PC-9 (cell line): ENCODE measurements at regions of chr1 and their contacts with region 1.

Region 1: DNA sequence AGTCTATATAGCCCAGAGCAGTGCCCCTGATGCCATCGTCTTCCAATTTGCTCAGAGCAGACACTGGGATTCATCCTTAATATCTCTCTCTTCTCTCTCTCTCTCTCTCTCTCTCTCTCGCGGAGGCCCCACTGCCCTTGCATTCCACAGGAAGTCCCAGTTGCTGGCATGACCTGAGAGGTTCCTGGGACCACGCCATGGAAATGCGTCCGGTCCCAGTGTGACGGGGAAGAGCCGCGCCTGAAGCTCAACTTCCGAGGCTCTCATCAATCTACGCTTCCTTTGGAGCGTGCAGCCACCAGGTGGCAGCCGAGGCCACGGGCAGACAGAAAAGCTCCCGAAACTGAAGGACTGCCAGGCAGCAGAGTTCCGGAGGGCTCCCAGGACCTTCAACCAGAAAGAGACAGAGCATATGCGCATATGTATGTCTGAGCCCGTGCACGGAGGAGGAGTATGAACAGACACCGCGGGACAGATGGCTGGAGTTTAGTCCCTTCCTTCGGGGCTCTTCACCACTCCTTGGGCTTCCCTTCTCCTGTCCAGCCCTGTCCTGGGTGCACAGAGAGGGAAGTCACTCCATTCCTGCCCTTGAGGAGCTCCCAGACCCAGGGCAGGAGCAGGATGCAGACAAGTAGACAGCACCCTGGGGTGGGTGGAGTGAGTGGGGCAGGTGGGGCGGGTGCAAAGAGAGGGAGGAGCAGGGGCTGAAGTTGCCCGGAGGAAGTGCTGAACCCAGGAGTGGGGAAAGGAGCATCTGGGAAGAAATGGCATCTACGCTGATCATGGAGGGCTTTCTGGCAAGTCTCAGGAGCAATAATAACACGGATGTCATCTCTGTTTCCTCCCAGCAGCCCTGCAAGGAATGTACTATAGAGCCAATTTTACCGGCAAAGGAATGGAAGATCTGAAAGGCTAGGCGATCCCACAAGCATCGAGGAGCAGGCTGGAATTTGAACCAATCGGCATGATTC is 10.5 kb downstream of the PDZK1IP1 start:
- DNase-seq: peak; percentile 86 to 95
- H3K4me3 ChIP-seq: peak overlapping the region; percentile 54
- H3K27ac ChIP-seq: 0 out of 2 replicates have a peak overlapping the region, but pooled peaks have one; percentile 5
- H3K4me1 ChIP-seq: peaks cover 10% of the 10 kb centered on the region
- H3K27me3 ChIP-seq: no peaks in the 10 kb centered on the region
- CTCF ChIP-seq: peak; percentile 89

Region 2: GRCh38 chr1:46527474-46528296 is 651.6 kb before region 1 on chr1:
- CTCF ChIA-PET with region 1: no interaction called
- POLR2A ChIA-PET with region 1: no interaction called
- intact Hi-C with region 1: loop called (anchors 2 kb)
- DNase-seq: peak; percentile 64 to 87
- H3K4me3 ChIP-seq: no peak overlapping the region
- H3K27ac ChIP-seq: no peak overlapping the region
- H3K4me1 ChIP-seq: peaks cover 28% of the 10 kb centered on the region
- H3K27me3 ChIP-seq: no peaks in the 10 kb centered on the region
- CTCF ChIP-seq: peak; percentile 92

Region 3: DNA sequence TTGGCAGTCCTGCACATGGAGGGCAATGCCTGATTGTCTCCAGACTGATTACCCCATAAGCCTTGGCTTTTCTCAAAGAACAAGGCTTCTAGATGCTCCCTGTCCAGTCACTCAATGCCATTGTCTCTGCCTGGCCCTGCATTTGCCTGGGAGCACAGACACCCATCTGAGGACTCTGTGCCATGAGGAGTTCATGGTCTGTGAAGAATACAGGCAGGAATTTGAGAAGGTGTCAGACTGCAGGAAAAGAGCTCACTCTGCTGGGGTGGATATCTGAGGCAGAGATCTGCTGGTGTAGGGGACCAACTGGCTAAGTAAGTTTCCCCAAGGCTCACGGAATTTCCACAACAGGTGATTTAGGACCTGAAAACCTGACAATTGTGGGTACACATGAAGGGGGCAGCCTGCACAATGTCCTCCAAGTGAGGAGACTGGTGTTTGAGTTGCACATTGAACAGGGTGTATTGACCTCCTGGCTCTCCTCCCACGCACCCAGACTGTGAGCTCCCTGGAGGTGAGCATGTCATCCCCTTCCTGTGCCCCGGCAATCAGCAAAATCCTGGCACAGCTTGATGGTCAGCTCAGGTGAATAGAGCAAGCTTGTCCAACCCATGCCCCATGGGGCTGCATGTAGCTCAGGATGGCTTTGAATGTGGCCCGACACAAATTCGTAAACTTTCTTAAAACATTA is 41.2 kb before region 1 on chr1:
- CTCF ChIA-PET with region 1: no interaction called
- POLR2A ChIA-PET with region 1: no interaction called
- intact Hi-C with region 1: no loop called
- DNase-seq: no peak
- H3K4me3 ChIP-seq: no peak overlapping the region
- H3K27ac ChIP-seq: no peak overlapping the region
- H3K4me1 ChIP-seq: no peaks in the 10 kb centered on the region
- H3K27me3 ChIP-seq: no peaks in the 10 kb centered on the region
- CTCF ChIP-seq: no peak

Region 4: GRCh38 chr1:47192458-47193384 is 13.4 kb after region 1 on chr1:
- CTCF ChIA-PET with region 1: interaction called, 17 read pairs
- POLR2A ChIA-PET with region 1: interaction called, 7 read pairs
- intact Hi-C with region 1: loop called (anchors 1 kb)
- DNase-seq: peak; percentile 57 to 69
- H3K4me3 ChIP-seq: no peak overlapping the region
- H3K27ac ChIP-seq: no peak overlapping the region
- H3K4me1 ChIP-seq: no peaks in the 10 kb centered on the region
- H3K27me3 ChIP-seq: no peaks in the 10 kb centered on the region
- CTCF ChIP-seq: peak; percentile 95

Region 5: DNA sequence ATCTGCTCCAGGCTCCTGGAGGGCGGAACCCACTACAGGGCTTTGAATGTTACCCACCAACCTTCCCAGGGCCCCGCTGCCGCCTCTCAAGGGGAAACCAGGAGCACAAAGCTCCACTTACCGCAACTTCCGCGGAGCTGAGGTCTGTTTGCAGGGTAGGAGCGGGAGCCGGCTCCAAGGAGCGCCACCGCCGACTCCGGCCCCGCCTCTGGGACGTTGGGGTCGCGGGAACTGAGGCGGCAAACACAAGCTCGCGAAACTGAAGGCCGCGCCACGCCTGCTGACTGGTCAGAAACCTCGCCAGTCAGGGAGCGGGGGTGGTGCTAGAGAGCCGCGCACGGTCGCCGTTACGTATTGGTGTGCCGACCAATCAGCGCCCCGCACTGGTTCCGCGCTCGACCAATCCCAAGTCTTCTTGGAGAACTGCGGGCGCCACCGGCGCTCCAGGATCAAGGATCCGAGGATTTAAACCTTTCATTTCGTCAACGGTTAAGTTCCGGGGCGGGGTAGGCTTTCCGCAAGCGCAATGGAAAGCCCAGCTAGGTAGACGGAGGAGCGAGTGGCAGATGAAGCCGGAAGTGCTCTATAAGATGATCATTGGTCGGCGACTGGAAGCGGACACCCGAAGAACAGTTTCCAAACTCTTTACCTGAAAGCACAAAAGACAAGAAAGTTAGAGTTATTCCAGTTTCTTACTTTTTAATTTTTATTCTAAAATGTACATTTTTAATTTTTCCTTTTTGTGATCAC is 134.8 kb after region 1 on chr1 and contains the start of gene STIL:
- CTCF ChIA-PET with region 1: interaction called, 5 read pairs
- POLR2A ChIA-PET with region 1: interaction called, 8 read pairs
- intact Hi-C with region 1: loop called (anchors 1 kb)
- DNase-seq: peak; percentile 99
- H3K4me3 ChIP-seq: peak within 1 kb of the TSS; percentile 67
- H3K27ac ChIP-seq: peak within 1 kb of the TSS; percentile 87
- H3K4me1 ChIP-seq: peaks cover 12% of the 10 kb centered on the region
- H3K27me3 ChIP-seq: no peaks in the 10 kb centered on the region
- CTCF ChIP-seq: no peak
- total RNA-seq, gene STIL: 35.8 and 37.0 TPM in 2 replicates

Region 6: DNA sequence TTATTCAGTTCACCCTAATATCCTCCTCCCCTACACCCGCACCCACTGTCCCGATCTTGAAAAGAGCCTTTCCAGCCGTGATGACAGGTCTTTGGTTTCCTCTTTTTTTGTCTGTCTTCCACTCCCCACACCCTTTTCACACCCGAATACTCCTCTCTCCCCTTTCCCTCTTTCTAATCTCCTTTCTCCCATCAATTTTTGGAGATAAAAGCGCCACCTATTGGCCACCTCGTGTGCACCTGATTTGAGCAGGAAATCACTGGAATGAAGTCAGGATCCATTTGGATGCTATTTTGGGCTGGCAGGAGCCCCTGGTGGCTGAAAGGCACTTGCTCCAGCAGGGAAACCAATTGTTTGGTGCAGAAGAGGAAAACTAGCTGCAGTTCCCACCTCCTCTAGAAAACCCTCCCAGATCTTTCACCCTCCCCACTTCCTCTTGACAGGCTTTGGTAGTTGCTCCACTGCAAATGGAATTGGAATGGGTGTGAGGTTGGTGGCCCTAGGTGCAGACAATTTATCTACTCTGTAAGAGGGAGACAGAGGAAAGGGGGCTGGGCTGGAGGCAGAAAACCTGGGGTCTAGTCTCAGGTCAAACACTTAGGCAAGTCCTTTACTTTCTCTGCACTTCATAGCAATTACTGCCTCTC is 245.2 kb after region 1 on chr1:
- CTCF ChIA-PET with region 1: no interaction called
- POLR2A ChIA-PET with region 1: no interaction called
- intact Hi-C with region 1: loop called (anchors 1 kb)
- DNase-seq: peak; percentile 32 to 51
- H3K4me3 ChIP-seq: no peak overlapping the region
- H3K27ac ChIP-seq: no peak overlapping the region
- H3K4me1 ChIP-seq: no peaks in the 10 kb centered on the region
- H3K27me3 ChIP-seq: no peaks in the 10 kb centered on the region
- CTCF ChIP-seq: peak; percentile 81

Region 7: DNA sequence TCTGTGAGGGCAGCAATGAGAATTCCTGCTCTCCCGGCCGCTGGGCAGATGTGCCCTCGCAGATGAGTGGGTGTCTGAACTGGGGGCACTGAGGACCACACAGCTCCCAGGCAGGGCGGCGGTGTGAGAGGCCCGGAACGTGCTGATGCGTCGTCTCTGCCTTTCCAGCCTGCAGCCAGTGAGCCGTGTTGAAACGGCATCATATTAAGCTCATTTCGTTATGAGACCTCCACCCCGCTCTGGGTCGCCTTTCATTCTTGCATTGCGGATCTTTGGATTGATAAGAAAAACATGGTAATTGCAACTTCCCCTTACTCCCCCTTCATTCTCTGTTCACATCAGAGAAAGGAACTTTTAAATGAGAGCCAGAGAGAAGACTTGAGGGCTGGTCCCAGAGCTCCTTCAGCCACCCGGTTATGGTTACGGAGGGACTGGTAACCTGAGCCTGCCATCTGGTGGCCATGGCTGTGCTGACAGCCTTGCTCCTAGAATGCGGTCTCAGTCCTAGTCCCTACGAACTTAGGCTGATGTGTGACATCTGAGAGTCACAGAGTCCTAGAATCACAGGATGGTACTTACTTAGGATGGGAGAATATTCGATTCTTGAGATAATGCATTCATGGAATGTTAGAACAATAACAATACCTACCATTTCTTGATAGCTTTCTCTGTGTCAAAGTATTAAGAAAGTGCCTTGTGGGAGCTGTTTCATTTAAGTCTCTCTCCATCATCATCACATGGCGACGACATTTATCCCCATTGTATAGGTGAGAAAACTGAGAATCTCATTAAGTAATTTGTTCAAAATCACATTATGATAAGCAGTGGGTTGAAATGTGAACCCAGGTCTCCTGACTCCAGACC is 546.9 kb after region 1 on chr1:
- CTCF ChIA-PET with region 1: interaction called, 8 read pairs
- POLR2A ChIA-PET with region 1: no interaction called
- intact Hi-C with region 1: loop called (anchors 5 kb)
- DNase-seq: peak; percentile 58 to 64
- H3K4me3 ChIP-seq: no peak overlapping the region
- H3K27ac ChIP-seq: no peak overlapping the region
- H3K4me1 ChIP-seq: no peaks in the 10 kb centered on the region; the same call in 1 of the 2 replicates
- H3K27me3 ChIP-seq: no peaks in the 10 kb centered on the region; the same call in 1 of the 2 replicates
- CTCF ChIP-seq: peak; percentile 88